B cell (primary cell): ENCODE measurements at regions of chr1 and their contacts with region 1.

Region 1: DNA sequence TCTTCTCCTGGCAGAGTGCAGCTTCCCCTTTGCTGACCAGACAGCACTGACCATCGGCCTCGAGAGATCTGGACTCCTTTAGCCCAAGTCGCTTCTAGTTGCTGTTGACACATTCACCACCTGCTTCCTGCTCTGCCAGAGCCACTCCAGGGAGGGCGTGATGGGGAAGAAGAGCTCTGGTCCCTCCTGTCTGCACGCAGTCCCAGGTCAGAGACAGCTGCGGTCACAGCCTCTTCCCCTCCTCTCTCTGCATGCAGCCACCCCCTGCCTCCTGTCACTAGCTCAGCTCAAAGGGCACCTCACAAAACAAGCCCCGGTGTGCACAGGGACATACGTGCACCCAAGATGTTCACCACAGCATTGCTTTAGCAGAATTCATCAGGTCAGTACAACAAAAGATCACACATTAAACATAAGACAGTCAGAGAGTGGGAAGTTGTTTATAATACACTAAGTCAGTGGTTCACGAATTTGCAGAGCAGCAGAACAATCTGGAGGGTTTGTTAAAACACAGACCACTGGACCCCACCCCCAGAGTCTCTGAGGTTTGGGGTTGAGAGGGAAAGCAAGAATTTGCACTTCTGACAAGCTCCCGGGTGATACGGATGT is 132.9 kb downstream of the SYF2 start:
- DNase-seq: peak; percentile 42
- ATAC-seq: peak; percentile 34
- H3K4me3 ChIP-seq: no peak overlapping the region
- H3K4me3 Mint-ChIP-seq: peak overlapping the region; percentile 65
- H3K27ac ChIP-seq: no peak overlapping the region
- H3K27ac Mint-ChIP-seq: peak overlapping the region; percentile 66
- H3K4me1 ChIP-seq: peaks cover 29 to 49% of the 10 kb centered on the region in 2 donors
- H3K4me1 Mint-ChIP-seq: peaks cover 44% of the 10 kb centered on the region
- H3K27me3 ChIP-seq: no peaks in the 10 kb centered on the region
- H3K27me3 Mint-ChIP-seq: no peaks in the 10 kb centered on the region
- CTCF ChIP-seq: no peak

Region 2: DNA sequence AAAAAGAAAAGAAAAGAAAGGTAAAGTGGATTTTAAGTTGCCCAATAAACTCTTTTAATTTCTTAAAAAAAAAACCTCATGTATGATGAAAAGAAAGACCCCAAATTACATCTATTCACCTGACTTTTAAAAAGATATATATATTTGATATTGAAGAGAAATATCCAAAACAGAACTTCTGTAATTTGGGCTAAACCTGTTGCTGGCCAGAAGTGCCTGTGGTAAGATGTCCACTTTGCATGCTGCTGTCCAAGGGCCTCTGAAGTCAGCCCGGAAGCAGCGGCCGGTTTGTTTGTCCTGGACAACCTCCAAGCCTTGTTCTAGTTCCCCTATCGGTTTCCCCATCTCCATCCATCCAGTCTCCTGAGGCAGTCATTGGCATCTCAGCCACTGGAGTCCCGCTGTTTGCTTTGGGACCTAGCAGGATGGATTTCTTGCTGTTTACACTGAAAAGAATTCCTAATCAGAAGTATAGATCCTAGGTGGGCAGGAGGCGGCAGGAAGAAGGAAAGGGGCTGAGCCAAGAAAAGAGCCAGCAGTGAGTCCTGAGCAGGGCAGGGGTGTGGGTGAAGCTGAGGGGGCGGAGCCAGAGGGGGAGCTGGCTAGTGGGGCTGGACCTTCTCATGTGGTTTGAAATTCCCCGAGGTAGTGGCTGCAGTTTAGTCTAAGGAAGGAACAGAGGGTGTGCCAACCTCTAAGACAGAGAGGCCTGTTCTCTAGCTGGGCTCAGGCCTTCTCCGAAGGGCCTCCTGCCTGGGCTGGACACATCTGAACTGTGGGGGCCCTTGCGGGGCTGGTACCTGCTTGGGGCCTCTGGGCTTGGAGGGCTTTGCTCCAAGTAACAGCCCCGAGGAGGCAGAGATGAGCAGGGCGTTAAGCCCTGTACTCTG is 540.3 kb before region 1 on chr1:
- CTCF ChIA-PET with region 1: no interaction called
- POLR2A ChIA-PET with region 1: no interaction called
- intact Hi-C with region 1: no loop called
- DNase-seq: no peak
- ATAC-seq: no peak
- H3K4me3 ChIP-seq: no peak overlapping the region
- H3K4me3 Mint-ChIP-seq: no peak overlapping the region
- H3K27ac ChIP-seq: no peak overlapping the region
- H3K27ac Mint-ChIP-seq: peak overlapping the region; percentile 10
- H3K4me1 ChIP-seq: peaks cover 11 to 12% of the 10 kb centered on the region in 2 donors
- H3K4me1 Mint-ChIP-seq: peaks cover 14% of the 10 kb centered on the region
- H3K27me3 ChIP-seq: peaks cover 0 to 34% (median 9%) of the 10 kb centered on the region in 4 experiments
- H3K27me3 Mint-ChIP-seq: peaks cover 21% of the 10 kb centered on the region
- CTCF ChIP-seq: no peak

Region 3: DNA sequence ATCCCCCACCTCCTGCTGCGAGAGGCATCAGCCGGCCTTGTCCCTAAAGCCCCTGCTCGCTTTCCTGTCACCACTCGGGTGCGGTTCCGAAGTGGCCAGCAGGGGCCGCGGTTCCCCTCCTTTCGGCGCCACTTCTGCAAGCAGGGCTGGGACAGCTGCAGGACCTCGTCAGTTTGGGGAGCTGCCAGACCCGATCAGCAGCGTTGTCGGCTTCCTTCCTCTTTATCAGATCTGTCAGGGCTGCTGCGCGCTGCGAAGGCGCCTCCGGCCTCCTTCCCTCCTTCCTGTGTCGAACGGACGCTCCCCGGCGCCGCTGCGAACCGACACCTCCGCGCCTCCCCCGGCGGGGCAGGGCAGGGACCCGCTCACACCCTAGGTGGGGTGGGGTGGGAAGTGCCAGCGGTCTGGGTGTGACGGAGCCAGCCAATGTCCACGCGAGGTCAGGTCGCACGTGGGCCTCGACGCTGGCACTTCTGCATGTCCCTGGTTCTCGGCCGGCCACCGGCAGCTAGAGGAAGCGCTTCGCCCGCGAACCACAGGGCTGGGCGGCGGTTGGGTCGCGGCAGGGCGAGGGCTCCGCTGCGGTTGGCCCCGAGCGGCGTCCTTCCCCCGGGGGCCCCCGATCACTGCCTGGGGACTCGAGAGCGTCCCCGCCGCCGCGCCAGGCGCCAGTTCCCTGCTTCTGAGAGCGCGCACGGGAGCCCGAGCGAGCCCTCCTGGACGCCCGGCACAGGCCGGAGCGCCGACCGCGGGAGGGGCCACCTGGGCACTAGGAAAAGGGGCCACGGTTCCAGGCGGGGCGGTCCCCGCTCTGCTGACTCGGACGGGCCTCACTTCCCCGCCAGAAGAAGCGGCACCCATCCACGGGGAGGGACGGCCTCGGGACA is 251.2 kb before region 1 on chr1:
- CTCF ChIA-PET with region 1: interaction called, 70 read pairs
- POLR2A ChIA-PET with region 1: interaction called, 5 read pairs
- intact Hi-C with region 1: loop called (anchors 1 kb)
- DNase-seq: peak; percentile 95
- ATAC-seq: peak; percentile 94
- H3K4me3 ChIP-seq: peak overlapping the region in 4 of 5 experiments; percentile 54 to 66 (median 64)
- H3K4me3 Mint-ChIP-seq: peak overlapping the region; percentile 80
- H3K27ac ChIP-seq: peak overlapping the region; percentile 68 to 83
- H3K27ac Mint-ChIP-seq: peak overlapping the region; percentile 78
- H3K4me1 ChIP-seq: peaks cover 4 to 13% of the 10 kb centered on the region in 2 donors
- H3K4me1 Mint-ChIP-seq: peaks cover 12% of the 10 kb centered on the region
- H3K27me3 ChIP-seq: no peaks in the 10 kb centered on the region
- H3K27me3 Mint-ChIP-seq: no peaks in the 10 kb centered on the region
- CTCF ChIP-seq: peak; percentile 94

Region 4: DNA sequence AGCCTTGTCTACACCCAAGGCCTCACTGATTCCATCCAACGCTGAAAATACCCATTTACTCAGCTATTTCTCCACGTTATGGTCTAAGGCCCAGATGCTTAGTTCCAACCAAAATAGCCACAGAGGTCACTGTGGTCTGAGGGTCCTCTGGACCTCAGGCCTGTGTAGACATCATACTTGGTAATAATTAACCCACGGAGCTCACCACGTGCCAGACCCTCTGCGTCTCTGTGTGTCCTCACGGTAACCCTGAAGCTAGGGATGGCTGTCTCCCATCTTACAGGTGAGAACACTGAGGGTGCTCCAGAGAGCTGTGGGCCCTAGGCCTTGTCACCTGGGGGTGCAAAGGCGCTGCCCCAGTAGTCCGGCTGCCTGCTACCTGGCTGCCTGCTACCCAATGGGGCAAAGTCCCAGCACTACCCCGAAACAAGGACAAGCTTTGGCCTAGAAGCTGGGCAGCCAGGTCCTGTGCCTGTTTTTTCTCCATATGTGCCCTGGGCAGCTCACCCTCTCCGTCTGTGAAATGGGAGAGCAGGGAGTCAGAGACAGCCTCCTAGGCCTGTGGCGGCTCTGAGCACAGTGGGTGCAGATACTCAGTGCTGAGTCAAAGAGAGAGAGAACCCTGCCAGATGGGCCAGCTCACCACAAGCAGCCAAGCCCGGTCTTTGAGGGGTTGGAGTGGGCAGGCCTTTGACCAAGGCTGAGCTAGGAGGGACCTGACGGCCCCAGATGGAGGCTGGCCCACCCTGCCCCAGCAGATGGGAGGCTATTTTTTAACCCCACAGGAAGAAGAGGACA is 152.4 kb before region 1 on chr1:
- CTCF ChIA-PET with region 1: interaction called, 19 read pairs
- POLR2A ChIA-PET with region 1: no interaction called
- intact Hi-C with region 1: loop called (anchors 1 kb)
- DNase-seq: peak; percentile 23
- ATAC-seq: no peak
- H3K4me3 ChIP-seq: no peak overlapping the region
- H3K4me3 Mint-ChIP-seq: no peak overlapping the region
- H3K27ac ChIP-seq: no peak overlapping the region
- H3K27ac Mint-ChIP-seq: peak overlapping the region; percentile 32
- H3K4me1 ChIP-seq: peaks cover 13 to 34% of the 10 kb centered on the region in 2 donors
- H3K4me1 Mint-ChIP-seq: peaks cover 36% of the 10 kb centered on the region
- H3K27me3 ChIP-seq: no peaks in the 10 kb centered on the region
- H3K27me3 Mint-ChIP-seq: no peaks in the 10 kb centered on the region
- CTCF ChIP-seq: no peak

Region 5: DNA sequence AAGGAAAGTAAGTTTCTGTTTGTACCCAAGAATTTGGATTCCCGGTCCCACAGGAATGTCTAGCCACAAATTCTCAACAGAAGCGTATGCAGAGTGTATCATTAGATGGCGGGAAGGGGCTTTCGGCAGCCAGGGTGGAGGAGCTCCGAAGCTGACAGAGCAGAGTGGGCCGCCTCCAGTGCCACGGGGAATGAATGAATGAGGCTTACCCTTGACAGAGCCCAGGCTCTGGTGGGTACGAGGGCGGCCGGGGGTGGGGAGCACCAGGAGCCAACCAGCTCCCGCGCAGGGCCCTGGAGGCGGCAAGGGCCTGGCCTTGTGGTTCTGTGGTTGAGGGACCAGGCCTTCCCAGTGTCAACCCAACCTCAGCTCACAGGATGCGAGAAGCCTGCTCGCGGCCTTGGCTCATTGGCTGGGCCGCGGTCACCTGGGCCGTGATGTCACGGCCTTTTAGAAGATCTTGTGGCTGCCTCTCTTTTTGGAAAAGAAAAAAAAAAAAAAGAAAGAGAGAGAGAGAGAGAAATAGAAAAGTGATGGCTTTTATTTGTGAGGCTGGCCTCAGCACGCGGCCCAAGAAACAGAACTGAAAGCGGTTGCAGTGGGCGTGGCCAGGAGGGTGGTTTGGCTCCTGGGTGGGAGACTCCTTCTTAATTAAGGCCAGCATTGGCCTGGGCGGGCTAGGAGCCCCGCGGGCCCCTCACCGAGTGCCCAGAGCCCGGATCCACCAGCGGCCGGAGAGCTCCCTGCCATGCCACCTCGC is 134.5 kb before region 1 on chr1:
- CTCF ChIA-PET with region 1: interaction called, 10 read pairs
- POLR2A ChIA-PET with region 1: no interaction called
- intact Hi-C with region 1: loop called (anchors 1 kb)
- DNase-seq: peak; percentile 93
- ATAC-seq: peak; percentile 88
- H3K4me3 ChIP-seq: peak overlapping the region in 4 of 5 experiments; percentile 10 to 40 (median 24)
- H3K4me3 Mint-ChIP-seq: peak overlapping the region; percentile 79
- H3K27ac ChIP-seq: peak overlapping the region; percentile 75 to 77
- H3K27ac Mint-ChIP-seq: peak overlapping the region; percentile 89
- H3K4me1 ChIP-seq: peaks cover 21 to 44% of the 10 kb centered on the region in 2 donors
- H3K4me1 Mint-ChIP-seq: peaks cover 50% of the 10 kb centered on the region
- H3K27me3 ChIP-seq: no peaks in the 10 kb centered on the region
- H3K27me3 Mint-ChIP-seq: no peaks in the 10 kb centered on the region
- CTCF ChIP-seq: no peak

Region 6: DNA sequence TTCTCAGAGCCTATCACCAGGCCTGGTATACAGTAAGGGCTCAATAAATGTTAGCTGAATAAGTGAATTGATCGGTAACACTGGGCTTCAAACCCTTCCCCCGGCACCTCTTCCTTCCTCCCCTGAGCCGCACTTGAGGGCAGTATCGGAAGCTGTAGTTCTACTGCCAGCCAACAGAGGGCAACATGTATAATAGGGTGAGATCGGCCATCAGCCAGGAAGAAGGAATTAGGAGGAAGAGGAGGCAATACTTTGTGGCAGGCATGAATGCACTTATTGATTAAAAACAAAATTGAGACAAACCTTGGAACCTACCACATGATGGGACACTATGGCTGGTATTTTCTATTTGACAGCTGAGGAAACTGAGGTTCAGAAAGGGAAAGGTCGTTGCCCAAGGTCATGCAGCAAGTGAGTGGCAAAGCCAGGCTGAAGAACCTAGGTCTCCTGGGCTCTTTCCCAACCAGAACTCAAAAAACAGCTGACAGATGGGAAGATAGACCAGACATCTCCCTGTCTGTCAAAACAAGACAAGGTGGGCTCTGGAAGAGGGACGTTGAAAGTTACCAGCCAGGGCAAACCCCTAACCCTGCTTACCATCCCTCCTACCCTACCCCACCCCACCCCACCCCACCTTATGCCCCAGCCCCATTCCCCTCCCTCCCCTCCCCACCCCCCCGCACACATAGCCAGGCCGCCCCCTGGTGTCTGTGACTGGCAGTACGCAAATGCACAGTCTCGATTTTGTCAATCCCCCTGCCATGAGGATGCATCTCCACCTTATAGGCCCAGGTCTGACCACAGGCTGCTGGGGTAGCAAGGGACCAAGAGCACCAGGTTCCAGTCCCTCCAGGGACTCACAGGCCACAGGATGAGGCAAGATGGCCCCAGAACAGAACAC is 62.0 kb before region 1 on chr1:
- CTCF ChIA-PET with region 1: interaction called, 41 read pairs
- POLR2A ChIA-PET with region 1: no interaction called
- intact Hi-C with region 1: loop called (anchors 5 kb)
- DNase-seq: peak; percentile 74
- ATAC-seq: peak; percentile 65
- H3K4me3 ChIP-seq: no peak overlapping the region
- H3K4me3 Mint-ChIP-seq: peak overlapping the region; percentile 0
- H3K27ac ChIP-seq: no peak overlapping the region
- H3K27ac Mint-ChIP-seq: peak overlapping the region; percentile 63
- H3K4me1 ChIP-seq: peaks cover 36 to 49% of the 10 kb centered on the region in 2 donors
- H3K4me1 Mint-ChIP-seq: peaks cover 34% of the 10 kb centered on the region
- H3K27me3 ChIP-seq: peaks cover 0 to under 1% (median 0%) of the 10 kb centered on the region in 4 experiments
- H3K27me3 Mint-ChIP-seq: peaks cover 5% of the 10 kb centered on the region
- CTCF ChIP-seq: peak; percentile 71

Region 7: DNA sequence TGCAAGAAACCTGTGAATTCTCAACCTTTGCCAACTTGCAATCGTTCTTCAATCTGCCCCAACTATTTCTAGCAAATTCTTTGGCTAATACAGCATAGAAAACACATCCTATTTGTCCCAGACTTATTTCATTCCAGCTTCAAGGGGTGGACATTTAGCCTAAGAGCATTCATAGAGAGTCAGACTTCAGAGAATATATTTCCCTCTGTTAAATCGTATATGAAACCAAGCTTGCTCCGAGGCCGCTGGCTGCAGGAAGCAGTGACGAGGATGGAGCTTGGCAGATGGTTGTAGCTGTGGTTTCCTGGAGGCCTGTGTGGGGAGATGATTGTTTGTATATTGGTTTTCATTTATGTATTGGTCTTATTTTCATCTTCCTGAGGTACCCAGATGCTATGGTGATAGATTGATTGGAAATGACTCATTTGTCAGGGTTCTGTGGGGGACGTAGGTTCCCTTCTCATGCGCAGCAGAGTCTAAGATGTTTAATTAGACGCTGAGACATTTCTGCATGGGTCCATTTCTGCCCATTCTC is 543.2 kb after region 1 on chr1:
- CTCF ChIA-PET with region 1: no interaction called
- POLR2A ChIA-PET with region 1: no interaction called
- intact Hi-C with region 1: no loop called
- DNase-seq: peak; percentile 44
- ATAC-seq: peak; percentile 65
- H3K4me3 ChIP-seq: no peak overlapping the region
- H3K4me3 Mint-ChIP-seq: no peak overlapping the region
- H3K27ac ChIP-seq: no peak overlapping the region
- H3K27ac Mint-ChIP-seq: no peak overlapping the region
- H3K4me1 ChIP-seq: peaks cover 8 to 9% of the 10 kb centered on the region in 2 donors
- H3K4me1 Mint-ChIP-seq: peaks cover 14% of the 10 kb centered on the region
- H3K27me3 ChIP-seq: peaks cover 0 to 23% (median 15%) of the 10 kb centered on the region in 4 experiments
- H3K27me3 Mint-ChIP-seq: peaks cover 70% of the 10 kb centered on the region
- CTCF ChIP-seq: no peak